Aorta (tissue), 5 donors: ENCODE measurements at regions of chr17 and their contacts with region 1.

Region 1: DNA sequence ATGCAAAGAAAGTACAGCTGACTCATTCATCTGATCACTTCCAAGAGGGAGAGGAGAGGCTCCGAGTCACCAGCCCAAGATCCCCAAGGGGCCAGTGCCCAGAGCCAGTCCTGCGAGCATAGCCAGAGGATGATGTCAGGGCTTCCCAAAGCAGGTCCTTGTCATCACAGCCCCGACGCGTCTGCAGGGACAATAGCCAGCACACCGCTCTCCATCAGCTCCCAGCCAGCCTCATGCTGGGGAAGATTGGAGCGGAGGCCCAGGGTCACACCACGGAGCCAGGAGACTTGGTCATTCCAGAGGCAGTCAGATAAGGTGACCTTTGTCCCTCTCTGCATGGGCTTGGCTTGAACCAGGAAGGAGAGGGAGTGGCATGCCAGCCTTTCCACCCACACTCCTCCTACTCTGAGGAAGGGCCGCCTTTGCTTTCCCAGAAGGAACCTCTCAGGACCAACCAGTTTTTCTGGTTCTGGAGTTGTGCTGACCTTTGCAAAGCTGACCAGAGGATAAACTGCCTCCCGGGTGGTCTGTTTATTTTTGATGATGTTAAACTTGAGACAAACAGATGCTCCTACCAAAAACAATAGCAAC is 58.3 kb upstream of the ARHGAP44 start:
- DNase-seq: peak; percentile 92 to 95
- ATAC-seq: peak; percentile 89
- H3K4me3 ChIP-seq: no peak overlapping the region
- H3K27ac ChIP-seq: peak overlapping the region; percentile 6 to 99
- H3K4me1 ChIP-seq: peaks cover 0 to 11% of the 10 kb centered on the region in 2 donors
- H3K27me3 ChIP-seq: no peaks in the 10 kb centered on the region

Region 2: GRCh38 chr17:12691182-12691581 is 39.8 kb before region 1 on chr17:
- intact Hi-C with region 1: loop called (anchors 5 kb)
- DNase-seq: peak; percentile 63 to 77
- ATAC-seq: peak; percentile 86
- H3K4me3 ChIP-seq: no peak overlapping the region
- H3K27ac ChIP-seq: peak overlapping the region; percentile 57 to 89
- H3K4me1 ChIP-seq: peaks cover 0 to 4% of the 10 kb centered on the region in 2 donors
- H3K27me3 ChIP-seq: no peaks in the 10 kb centered on the region